ENCODE measurements at regions of chr6 and their contacts with region 1.

Region 1: GRCh38 chr6:44010411-44011349 is 116.6 kb downstream of the MRPL14 start:
- DNase-seq: peak; percentile 90
- H3K4me3 ChIP-seq: no peak overlapping the region
- H3K27ac ChIP-seq: peak overlapping the region; percentile 82
- H3K4me1 ChIP-seq: peaks cover 32% of the 10 kb centered on the region
- H3K27me3 ChIP-seq: no peaks in the 10 kb centered on the region
- CTCF ChIP-seq: no peak

Region 2: DNA sequence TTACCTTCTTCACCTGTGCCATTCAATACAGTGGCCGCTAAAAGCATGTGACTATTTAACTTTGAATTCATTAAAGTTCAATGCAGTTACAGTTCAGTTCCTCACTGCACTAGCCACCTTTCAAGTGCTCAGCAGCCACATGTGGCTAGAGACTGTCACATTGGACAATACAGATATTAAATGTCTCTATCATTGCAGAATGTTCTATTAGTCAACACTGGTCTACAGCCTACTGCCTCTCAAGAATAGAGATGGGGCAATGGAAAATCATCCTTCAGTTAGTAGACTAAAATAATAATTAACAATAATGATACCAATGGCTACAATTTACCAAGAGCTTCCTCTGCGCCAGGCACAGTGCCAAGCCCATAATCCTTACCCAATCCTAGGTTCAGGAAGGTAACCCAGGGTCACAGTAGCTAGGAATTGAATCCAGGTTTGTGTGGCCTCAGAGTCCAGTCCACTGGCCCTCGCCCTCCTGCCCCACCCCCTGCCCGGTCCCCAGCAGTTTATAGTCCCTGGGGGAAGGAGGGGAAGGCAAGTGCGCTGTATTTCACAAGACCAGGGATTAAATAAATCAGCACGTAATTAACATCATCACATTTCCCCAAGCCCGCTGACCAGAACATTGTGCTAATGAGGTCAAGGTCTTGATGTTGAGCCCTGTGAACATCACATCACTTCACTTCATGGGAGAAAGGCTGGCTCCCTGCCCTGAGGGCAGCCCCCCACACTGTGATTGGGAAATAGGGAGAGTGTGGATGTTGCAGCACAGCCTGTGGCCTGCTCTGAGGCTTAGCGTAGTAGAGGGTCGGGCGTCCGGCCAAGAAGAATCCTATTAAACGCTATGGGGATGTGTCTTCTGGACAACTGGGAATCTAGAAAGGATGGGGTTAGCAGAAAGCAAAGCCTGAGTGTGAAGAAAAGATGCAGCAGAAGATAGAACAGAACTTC is 93.5 kb before region 1 on chr6:
- CTCF ChIA-PET with region 1: no interaction called
- dilution Hi-C with region 1: loop called (anchors 5 kb)
- in situ Hi-C with region 1: no loop called
- intact Hi-C with region 1: loop called (anchors 5 kb)
- DNase-seq: no peak
- H3K4me3 ChIP-seq: no peak overlapping the region
- H3K27ac ChIP-seq: no peak overlapping the region
- H3K4me1 ChIP-seq: no peaks in the 10 kb centered on the region
- H3K27me3 ChIP-seq: no peaks in the 10 kb centered on the region
- CTCF ChIP-seq: no peak

Region 3: DNA sequence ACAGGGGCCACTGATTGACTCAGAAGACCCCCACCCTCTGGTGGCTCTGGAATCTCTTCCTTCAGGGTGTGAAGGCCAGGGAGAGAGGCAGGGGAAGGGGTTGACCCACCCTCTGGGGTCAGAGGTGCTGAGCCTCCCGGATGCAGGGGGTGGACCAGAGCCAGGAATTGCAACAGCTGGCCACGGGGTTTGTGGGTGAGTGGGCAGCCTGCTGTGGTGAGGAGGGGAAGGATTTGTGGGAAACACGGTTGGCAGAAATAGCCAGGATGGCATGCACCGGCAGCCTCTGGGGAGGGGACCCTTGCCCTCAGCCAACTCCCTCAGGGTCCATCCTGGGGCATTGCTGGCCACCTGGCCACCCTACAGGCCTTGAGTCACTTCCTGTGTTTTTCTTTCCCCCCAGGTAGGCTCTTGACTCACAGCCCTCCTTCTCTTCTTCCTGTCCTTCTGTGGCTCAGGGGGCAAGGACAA is 23.7 kb after region 1 on chr6:
- CTCF ChIA-PET with region 1: no interaction called
- dilution Hi-C with region 1: no loop called
- in situ Hi-C with region 1: no loop called
- intact Hi-C with region 1: loop called (anchors 2 kb)
- DNase-seq: peak; percentile 85
- H3K4me3 ChIP-seq: peak overlapping the region in 1 of 3 experiments; percentile 10
- H3K27ac ChIP-seq: peak overlapping the region; percentile 93
- H3K4me1 ChIP-seq: peaks cover 51% of the 10 kb centered on the region
- H3K27me3 ChIP-seq: no peaks in the 10 kb centered on the region
- CTCF ChIP-seq: no peak

Region 4: GRCh38 chr6:44058617-44059358 is 48.1 kb after region 1 on chr6:
- CTCF ChIA-PET with region 1: interaction called, 4 read pairs
- dilution Hi-C with region 1: loop called (anchors 5 kb)
- in situ Hi-C with region 1: no loop called
- intact Hi-C with region 1: loop called (anchors 1 kb)
- DNase-seq: peak; percentile 99
- H3K4me3 ChIP-seq: no peak overlapping the region
- H3K27ac ChIP-seq: peak overlapping the region; percentile 95
- H3K4me1 ChIP-seq: peaks cover 89% of the 10 kb centered on the region
- H3K27me3 ChIP-seq: no peaks in the 10 kb centered on the region
- CTCF ChIP-seq: no peak

Region 5: DNA sequence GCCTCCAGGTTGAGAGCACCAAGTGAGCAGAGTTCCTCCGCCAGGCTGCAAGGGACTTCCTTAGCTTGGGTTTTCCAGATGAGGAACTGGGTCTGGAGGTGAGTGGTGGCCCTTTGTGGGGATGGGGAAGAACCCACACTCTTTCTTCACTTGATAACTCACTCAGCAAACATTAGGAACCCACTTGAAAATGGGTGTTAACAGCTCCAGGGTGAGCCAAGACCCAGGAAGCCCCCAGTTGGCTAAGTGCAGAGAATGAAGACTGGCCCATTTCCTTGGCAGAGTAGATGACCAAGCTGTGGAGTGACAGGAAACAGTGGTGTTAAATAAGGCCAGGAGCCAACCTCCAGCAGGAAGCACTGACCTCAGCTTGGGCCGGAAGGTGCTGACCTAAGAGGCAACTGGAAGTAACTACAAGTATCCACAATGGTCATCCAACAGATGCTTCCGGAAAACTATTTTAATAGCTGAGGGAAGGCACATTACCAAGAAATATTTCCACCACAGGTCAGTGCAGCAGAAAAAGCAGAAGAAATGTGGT is 93.9 kb after region 1 on chr6:
- CTCF ChIA-PET with region 1: no interaction called
- dilution Hi-C with region 1: loop called (anchors 5 kb)
- in situ Hi-C with region 1: no loop called
- intact Hi-C with region 1: no loop called
- DNase-seq: no peak
- H3K4me3 ChIP-seq: no peak overlapping the region
- H3K27ac ChIP-seq: no peak overlapping the region
- H3K4me1 ChIP-seq: no peaks in the 10 kb centered on the region
- H3K27me3 ChIP-seq: no peaks in the 10 kb centered on the region
- CTCF ChIP-seq: no peak

Measured in mammary epithelial cell (primary cell).